Left colon (tissue), 2 donors: ENCODE measurements at regions of chr12 and their contacts with region 1.

Region 1: DNA sequence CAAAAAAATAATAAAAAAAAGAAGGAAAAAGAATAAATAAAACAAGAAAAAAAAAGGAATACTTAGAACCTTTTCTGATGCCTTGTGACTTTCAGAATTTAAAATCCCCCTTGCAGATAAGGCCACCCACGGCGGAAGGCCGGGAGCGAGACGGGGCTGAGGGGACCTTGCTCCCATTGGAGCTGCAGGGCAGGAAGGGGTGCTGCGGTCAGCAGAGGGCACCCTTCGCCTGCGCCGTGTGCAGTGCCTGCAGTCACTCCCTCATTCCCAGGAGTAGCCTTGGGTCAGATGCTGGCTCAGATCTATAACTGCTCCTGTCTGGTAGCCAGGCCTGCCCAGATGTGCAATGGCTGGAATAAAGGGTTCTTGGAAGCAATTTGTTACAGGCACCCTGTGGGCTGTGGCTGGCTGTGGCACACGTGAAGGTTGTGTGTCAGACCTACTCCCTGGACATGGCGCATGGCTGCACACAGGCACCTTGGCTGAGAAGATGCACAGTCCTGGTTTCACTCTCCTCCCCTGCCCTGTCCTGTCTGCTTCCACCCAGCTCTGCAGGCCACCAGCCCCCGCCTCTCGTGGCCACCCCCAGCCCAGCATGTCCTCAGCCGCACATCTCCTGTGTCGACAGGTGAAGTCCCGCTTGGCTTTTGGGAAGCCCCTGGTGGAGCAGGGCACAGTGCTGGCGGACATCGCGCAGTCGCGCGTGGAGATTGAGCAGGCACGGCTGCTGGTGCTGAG is 13.4 kb upstream of the ALDH2 start:
- DNase-seq: peak; percentile 53 to 73
- ATAC-seq: peak; percentile 97

Region 2: GRCh38 chr12:111807232-111807631 is 53.9 kb after region 1 on chr12:
- intact Hi-C with region 1: loop called (anchors 10 kb)
- DNase-seq: peak in 1 of 2 donors; percentile 51
- ATAC-seq: peak; percentile 96

Region 3: DNA sequence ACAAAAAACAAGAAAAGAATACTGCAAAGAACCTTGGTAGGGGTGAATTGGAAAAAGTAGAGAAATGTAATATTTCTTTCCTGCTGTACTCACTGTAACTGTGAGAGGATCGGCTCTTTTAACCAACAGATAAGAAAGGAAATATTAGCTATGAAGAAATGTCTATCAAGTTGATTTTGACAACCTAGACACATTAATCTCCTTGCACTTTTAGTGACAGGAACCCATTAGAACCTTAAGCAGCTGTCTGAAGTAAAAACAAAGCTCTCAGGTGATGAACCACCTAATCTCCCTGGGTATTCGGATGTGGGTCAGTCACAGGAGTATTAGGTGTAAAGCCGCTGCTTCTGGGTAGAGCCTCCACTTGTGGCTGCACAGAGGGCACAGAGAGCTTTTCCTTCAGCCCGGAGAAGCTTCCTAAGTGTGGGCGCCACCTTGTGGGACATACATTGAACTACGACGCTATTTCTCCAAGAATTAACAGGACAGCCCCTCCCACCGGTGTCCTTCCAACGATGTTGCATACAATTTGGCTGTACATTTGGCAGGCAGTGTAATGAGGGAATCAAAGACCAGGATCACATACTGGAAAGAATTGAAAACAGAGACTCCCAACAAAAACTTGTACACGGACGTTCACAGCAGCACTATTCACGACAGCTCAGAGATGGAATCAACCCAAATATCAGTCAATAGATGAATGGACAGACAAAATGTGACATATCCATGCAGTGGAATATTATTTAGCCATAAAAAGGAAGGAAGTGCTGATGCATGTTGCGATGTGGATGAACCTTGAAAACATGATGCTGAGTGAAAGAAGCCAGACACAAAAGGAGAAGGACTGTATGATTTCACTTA is 59.8 kb after region 1 on chr12:
- intact Hi-C with region 1: loop called (anchors 10 kb)
- DNase-seq: peak; percentile 69 to 83
- ATAC-seq: peak; percentile 90

Region 4: DNA sequence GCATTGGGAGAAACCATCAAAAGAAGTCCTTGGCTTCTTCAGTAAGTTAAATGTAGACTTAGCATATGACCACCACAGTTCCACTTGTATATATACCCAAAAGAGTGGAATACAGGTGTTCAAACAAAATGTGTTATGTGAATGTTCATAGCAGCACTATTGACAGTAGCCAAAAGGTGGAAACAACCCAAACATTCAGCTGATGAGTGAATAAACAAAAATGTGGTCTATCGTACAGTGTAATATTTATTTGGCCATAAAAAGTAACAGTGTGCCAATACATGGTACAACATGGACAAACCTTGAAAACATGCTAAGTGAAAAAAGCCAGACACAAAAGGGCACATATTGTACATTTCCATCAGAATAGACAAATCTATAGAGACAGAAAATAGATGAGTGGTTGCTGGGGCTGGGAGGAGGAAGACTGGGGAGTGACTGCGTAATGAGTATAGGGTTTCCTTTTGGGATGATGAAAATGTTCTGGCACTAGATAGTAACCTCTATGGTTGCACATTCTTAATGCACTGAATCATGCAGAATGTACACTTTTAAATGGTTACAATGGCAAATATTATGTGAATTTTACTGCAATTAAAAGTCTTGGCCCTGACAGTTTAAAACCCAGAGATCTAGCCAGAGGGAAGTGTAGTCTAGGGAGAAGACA is 265.4 kb after region 1 on chr12:
- intact Hi-C with region 1: no loop called
- DNase-seq: no peak
- ATAC-seq: no peak